ENCODE measurements at regions of chr7 and their contacts with region 1.

Region 1: GRCh38 chr7:63925623-63926460 is 72.8 kb upstream of the ZNF722 start:
- DNase-seq: peak; percentile 96
- ATAC-seq: peak; percentile 98

Region 2: DNA sequence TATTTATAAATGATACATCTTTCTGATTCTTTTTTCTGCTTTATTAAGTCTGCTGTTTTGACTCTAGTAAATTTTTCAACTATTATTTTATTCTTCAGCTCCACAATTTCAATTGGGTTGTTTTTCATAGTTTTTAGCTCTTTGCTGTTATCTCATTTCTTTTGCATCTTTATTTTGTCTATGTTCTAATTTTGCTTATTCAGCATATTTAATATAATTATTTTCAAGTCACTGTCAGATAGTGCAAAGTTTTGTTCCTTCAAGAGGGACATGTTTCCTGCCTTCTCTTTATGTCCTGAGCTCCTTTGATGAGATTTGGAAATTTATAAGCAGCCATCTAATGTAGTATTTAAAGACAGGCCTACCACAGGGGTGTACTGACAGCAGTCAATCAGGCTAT is 58.7 kb before region 1 on chr7:
- intact Hi-C with region 1: no loop called
- DNase-seq: no peak
- ATAC-seq: no peak

Region 3: DNA sequence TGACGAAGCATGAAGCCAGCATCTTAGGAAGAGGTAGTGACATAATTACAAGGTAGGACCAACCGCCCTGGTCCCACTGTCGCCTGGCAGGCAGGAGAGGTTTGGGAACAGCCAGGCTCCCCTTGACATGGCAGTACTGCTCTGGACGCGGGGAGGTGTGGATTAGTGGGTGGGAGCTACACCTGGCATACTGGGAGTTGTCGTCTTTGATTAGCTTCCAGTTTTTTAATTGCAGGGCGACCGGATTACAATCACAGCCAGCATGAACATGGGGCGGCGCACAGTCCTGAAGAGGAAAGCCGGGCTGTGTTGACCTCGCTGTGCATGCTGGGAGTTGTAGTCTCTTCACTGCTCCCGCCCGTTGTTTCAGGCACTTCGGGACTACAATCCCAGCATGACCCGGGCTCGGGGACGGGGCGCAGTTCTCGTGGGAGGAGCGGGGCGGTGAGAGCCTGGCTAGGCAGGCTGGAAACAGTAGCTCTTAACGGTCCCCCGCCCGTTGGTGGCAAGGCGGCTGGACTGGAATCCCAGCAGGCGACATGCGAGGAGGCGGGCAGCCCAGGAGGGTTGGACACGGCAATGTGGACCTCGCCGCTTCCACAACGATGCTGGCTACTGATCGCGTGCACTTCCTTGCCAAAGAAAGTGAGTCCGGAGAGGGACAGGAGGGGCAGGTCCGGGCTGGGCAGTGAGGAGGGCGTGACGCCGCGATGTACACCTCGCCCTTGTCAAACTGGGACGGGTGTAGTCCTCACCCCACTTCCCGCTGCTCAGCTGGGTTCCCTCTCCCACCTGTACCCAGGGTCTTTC is 25.2 kb before region 1 on chr7:
- intact Hi-C with region 1: loop called (anchors 1 kb)
- DNase-seq: peak; percentile 95
- ATAC-seq: peak; percentile 98

Region 4: DNA sequence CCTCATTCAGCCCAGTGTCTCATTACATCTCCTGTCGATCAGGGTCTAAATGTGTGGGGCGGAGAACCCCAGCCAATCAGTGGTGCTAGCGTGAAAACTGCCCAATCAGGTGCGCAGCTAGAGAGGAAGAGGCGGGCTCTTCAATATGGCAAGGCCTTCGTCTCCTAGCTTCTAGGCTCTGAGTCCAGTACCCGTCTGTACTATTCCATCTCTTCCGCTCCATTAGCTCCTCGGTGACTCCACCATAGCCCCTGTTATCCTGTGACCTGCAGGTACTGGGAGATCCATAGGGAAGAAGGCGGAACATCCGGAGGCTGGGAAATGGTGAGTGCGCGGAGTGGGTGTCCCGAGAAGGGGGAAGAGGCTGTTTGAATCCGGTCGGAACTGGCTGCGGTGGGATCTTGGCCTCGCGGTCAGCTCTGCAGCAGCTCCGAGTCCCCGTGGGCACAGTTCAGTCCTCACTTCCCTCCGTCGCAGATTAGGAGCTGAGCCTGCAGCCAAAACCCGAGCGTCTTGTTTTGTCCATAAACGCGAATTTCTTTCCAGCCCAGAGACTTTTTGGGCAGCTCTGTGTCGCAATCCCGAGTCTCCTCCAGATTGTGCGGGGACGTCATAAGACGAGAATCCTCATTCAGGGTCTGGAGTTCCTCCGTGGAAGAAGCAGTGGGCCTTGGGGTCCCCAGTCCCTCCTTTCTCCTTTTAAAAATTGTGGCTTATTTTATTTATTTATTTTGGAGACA is 119.6 kb after region 1 on chr7 and contains the start of gene ZNF727:
- intact Hi-C with region 1: loop called (anchors 5 kb)
- DNase-seq: peak; percentile 76
- ATAC-seq: peak; percentile 98
- total RNA-seq, gene ZNF727: 1.6 TPM

Region 5: GRCh38 chr7:64313740-64314491 is 388.1 kb after region 1 on chr7 and contains the start of gene ZNF736:
- intact Hi-C with region 1: loop called (anchors 10 kb)
- DNase-seq: peak; percentile 91
- ATAC-seq: peak; percentile 99
- total RNA-seq, gene ZNF736: 3.4 TPM